Activated CD4-positive, alpha-beta T cell treated with anti-CD3 and anti-CD28 coated beads for 36 hours (primary cell): ENCODE measurements at regions of chr12 and their contacts with region 1.

Region 1: DNA sequence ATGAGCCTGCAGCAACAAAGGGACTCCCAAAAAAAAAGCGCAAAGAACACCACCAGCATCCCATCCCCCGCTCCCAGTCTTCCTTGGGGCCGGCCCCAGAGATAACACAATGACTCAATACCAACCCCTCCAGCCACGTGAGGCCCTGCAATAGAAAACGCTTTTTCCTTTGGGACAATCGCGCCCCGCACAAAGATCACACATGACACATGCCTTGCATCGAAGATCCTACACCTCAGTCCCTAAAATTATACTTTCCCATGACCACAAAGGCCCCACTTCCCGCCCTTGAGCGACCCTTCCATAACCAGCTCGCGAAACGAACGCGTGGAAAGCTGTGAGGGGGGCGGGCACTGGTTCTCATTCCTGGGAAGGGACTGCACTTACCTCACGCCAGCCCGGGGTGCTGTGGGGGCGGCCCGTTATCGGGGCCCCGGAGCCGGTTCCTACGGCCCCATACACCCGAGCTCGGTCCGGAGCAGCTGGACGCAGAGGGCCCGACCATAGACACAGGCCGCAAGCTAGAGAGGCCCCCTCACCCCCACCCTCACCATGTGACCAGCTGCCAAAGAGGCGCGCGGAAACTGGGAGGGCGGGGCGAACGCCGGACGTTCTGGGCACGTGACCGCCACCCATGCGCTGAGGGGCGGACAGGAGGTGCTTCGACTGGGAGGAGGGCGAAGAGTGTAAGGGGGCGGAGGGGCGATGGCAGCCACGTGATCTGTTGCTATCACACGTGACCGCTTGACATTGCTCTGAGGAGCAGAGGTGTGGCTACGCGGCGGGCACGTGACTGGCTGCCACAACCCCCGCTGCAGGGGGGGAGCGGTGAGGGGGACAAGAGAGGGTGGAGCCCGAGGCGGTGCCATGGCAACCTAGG is at the start of gene CDK4:
- DNase-seq: peak; percentile 99
- ATAC-seq: peak; percentile 77
- H3K4me3 Mint-ChIP-seq: peak within 1 kb of the TSS; percentile 100
- H3K27ac Mint-ChIP-seq: peak within 1 kb of the TSS; percentile 99
- H3K4me1 Mint-ChIP-seq: peaks cover 56% of the 10 kb centered on the region
- H3K27me3 Mint-ChIP-seq: no peaks in the 10 kb centered on the region
- total RNA-seq, gene CDK4: 132 to 208 TPM

Region 2: DNA sequence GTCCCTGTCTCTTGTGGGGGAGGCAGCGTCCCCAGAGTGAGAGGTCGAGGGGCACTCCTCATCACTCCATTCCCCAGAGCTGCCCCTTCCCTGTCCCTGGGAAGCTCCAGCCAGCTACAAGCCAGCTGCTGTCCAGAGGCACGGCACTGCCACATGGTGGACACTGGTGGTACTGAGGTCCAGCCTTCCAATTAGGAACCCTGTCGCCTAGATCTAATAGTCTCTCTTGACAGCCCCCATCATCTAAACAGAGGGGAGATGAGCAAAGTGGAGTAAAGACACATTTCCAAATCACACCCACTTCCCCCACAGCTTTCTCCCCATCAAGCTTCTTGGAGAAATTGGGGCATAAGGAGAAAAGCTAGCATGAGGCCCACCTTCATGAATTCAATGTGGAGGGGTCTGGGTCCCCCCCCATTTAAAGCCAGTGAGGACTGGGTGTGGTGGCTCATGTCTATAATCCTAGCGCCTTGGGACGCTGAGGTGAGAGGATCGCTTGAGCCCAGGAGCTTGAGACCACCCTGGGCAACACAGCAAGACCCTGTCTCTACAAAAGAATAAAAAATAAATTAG is 299.0 kb before region 1 on chr12:
- CTCF ChIA-PET with region 1: no interaction called
- POLR2A ChIA-PET with region 1: no interaction called
- intact Hi-C with region 1: no loop called
- DNase-seq: peak; percentile 81
- ATAC-seq: peak; percentile 45
- H3K4me3 Mint-ChIP-seq: peak overlapping the region; percentile 31
- H3K27ac Mint-ChIP-seq: peak overlapping the region; percentile 47
- H3K4me1 Mint-ChIP-seq: peaks cover 31% of the 10 kb centered on the region
- H3K27me3 Mint-ChIP-seq: no peaks in the 10 kb centered on the region

Region 3: DNA sequence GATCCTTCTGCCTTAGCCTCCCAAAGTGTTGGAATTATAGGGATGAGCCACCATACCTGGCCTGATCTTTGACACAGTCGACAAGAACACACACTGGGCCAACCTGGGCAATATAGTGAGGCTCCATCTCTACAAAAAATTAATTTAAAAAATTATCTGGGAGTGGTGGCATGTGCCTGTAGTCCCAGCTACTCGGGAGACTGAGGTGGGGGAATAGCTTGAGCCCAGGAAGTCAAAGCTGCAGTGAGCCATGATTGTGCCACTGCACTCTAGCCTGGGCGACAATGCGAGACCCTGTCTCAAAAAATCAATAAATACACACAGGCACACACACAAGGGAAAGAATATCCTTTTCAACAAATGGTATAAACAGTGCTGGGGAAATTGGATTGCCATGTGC is 64.2 kb before region 1 on chr12:
- CTCF ChIA-PET with region 1: no interaction called
- POLR2A ChIA-PET with region 1: interaction called, 10 read pairs
- intact Hi-C with region 1: no loop called
- DNase-seq: no peak
- ATAC-seq: no peak
- H3K4me3 Mint-ChIP-seq: no peak overlapping the region
- H3K27ac Mint-ChIP-seq: no peak overlapping the region
- H3K4me1 Mint-ChIP-seq: no peaks in the 10 kb centered on the region
- H3K27me3 Mint-ChIP-seq: peaks cover 27% of the 10 kb centered on the region

Region 4: DNA sequence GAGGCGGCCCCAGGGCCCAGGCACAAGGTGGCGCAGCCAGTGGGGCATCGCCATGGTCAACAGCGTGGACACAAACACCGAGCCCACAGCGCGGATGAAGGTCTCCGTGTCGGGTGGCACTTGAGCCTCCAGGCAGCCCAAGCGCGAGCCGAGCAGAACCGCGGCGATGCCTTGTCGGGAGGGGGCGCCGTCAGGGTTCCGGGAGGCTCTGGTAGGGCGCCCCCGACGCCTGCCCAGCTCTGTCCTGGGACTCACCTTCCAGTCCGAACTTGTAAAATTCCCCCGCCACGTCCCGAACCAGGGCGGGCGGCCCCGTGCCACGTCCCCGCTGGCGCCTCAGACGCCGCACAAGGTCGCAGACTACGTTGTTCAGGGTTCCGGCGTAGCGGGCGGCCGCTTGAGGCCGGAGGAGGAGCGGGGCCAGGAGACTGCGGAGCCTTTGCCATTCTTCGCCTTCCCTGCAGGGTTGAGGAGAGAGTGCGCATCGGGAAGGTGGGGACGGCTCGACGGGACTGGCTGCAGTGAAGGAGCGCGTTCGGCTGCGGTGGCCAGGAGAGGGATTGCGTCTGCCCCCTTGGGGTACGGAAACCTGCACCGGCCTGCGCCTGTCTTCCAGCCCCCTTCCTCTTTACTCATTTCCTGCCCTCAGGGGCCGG is 13.1 kb after region 1 on chr12:
- CTCF ChIA-PET with region 1: interaction called, 54 read pairs
- POLR2A ChIA-PET with region 1: interaction called, 6 read pairs
- intact Hi-C with region 1: loop called in 1 of 2 experiments (anchors 1 kb)
- DNase-seq: peak; percentile 79
- ATAC-seq: peak; percentile 79
- H3K4me3 Mint-ChIP-seq: peak overlapping the region; percentile 83
- H3K27ac Mint-ChIP-seq: peak overlapping the region; percentile 84
- H3K4me1 Mint-ChIP-seq: peaks cover 29% of the 10 kb centered on the region
- H3K27me3 Mint-ChIP-seq: peaks cover 10% of the 10 kb centered on the region

Region 5: DNA sequence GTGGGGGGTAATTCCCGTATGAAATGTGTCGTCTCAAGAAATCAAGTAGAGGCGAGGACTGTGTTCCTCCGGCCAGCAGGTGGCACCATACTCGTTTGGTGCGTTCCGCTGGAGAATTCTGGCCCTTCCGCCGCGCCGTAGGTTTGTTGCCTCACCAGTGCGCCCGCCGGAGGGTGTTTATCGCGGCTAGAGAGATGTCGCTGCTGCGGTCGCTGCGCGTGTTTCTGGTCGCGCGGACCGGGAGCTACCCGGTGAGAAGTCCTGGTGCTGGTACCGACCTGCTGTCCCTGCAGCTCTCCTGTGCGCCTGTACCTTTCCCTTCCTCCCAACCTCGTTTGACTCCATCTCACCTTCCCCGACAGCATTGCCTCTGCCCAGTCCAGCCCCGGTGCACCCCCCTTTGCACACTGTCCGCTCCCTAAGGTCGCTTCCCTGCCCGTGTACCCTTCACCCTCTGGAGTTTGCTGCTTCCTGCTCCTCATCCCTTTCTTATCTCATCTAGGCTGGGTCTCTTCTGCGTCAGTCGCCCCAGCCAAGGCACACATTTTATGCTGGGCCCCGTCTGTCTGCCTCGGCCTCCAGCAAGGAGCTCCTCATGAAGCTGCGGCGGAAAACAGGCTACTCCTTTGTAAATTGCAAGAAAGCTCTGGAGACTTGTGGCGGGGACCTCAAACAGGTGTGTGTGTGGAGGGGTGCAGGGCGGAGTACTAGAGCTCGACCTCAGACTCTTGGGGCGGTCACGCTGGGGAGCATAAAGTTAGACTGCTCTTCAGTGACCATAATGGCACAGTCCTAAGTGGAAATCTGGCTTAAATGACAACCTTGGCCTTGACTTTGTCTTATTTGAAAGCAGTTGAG is 30.8 kb after region 1 on chr12 and contains the start of gene TSFM:
- CTCF ChIA-PET with region 1: interaction called, 24 read pairs
- POLR2A ChIA-PET with region 1: no interaction called
- intact Hi-C with region 1: loop called in 1 of 2 experiments (anchors 1 kb)
- DNase-seq: peak; percentile 99
- ATAC-seq: peak; percentile 93
- H3K4me3 Mint-ChIP-seq: peak within 1 kb of the TSS; percentile 98
- H3K27ac Mint-ChIP-seq: peak within 1 kb of the TSS; percentile 98
- H3K4me1 Mint-ChIP-seq: peaks cover 35% of the 10 kb centered on the region
- H3K27me3 Mint-ChIP-seq: no peaks in the 10 kb centered on the region
- total RNA-seq, gene TSFM: 30.7 to 56.9 TPM

Region 6: GRCh38 chr12:57846577-57847319 is 94.7 kb after region 1 on chr12 and contains the start of gene CTDSP2:
- CTCF ChIA-PET with region 1: interaction called, 5 read pairs
- POLR2A ChIA-PET with region 1: no interaction called
- intact Hi-C with region 1: loop called (anchors 1 to 5 kb)
- DNase-seq: peak; percentile 94
- ATAC-seq: peak; percentile 43
- H3K4me3 Mint-ChIP-seq: peak within 1 kb of the TSS; percentile 78
- H3K27ac Mint-ChIP-seq: peak within 1 kb of the TSS; percentile 70
- H3K4me1 Mint-ChIP-seq: peaks cover 44% of the 10 kb centered on the region
- H3K27me3 Mint-ChIP-seq: peaks cover 5% of the 10 kb centered on the region
- total RNA-seq, gene CTDSP2: 80.9 to 85.4 TPM

Region 7: GRCh38 chr12:57904848-57905811 is 153.1 kb after region 1 on chr12:
- CTCF ChIA-PET with region 1: interaction called, 5 read pairs
- POLR2A ChIA-PET with region 1: no interaction called
- intact Hi-C with region 1: loop called in 1 of 2 experiments (anchors 1 kb)
- DNase-seq: peak; percentile 91
- ATAC-seq: peak; percentile 98
- H3K4me3 Mint-ChIP-seq: peak overlapping the region; percentile 37
- H3K27ac Mint-ChIP-seq: no peak overlapping the region
- H3K4me1 Mint-ChIP-seq: peaks cover 3% of the 10 kb centered on the region
- H3K27me3 Mint-ChIP-seq: peaks cover 7% of the 10 kb centered on the region

Region 8: DNA sequence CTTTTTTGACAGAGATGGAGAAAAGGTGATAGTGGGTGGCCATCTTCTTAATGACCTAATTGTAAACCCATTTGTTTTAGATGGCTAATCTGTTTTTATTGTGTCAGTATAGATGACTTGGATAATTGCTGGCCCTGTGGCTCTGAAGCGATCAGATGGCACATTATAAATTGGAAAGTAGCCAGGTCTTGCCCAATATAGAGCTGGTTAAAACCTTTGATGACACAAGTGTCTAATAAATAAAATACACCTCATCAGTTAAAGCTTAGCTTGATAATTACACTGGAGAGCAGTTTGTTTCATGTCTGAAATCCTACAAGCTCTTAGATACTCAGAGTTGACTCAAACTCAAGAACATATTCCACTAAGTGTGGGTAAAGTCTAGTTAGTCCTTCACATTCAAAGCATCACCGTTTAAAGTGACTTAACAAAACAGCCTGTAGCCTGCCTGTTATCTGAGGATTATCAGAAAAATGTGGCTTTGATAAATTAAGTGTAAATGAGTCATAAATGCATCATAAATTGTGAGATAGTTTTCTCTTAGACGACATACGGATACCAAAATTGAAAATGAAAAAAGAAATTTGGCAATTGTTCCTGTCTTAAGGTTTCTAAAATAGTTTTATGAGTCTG is 887.4 kb after region 1 on chr12:
- CTCF ChIA-PET with region 1: no interaction called
- POLR2A ChIA-PET with region 1: no interaction called
- intact Hi-C with region 1: no loop called
- DNase-seq: no peak
- ATAC-seq: no peak
- H3K4me3 Mint-ChIP-seq: no peak overlapping the region
- H3K27ac Mint-ChIP-seq: no peak overlapping the region
- H3K4me1 Mint-ChIP-seq: no peaks in the 10 kb centered on the region
- H3K27me3 Mint-ChIP-seq: no peaks in the 10 kb centered on the region